ENCODE measurements at regions of chr22 and their contacts with region 1.

Region 1: GRCh38 chr22:42662114-42663021 is 13.2 kb upstream of the CYB5R3 start:
- DNase-seq: peak; percentile 72 to 90 (median 82)
- H3K4me3 ChIP-seq: peak overlapping the region in 1 of 4 donors; percentile 56
- H3K27ac ChIP-seq: peak overlapping the region in 2 of 5 donors; percentile 3 to 9
- H3K4me1 ChIP-seq: peaks cover 0 to 9% of the 10 kb centered on the region in 2 donors
- H3K27me3 ChIP-seq: no peaks in the 10 kb centered on the region
- CTCF ChIP-seq: peak; percentile 62 to 87 (median 74)
- POLR2A ChIP-seq: no peak

Region 2: DNA sequence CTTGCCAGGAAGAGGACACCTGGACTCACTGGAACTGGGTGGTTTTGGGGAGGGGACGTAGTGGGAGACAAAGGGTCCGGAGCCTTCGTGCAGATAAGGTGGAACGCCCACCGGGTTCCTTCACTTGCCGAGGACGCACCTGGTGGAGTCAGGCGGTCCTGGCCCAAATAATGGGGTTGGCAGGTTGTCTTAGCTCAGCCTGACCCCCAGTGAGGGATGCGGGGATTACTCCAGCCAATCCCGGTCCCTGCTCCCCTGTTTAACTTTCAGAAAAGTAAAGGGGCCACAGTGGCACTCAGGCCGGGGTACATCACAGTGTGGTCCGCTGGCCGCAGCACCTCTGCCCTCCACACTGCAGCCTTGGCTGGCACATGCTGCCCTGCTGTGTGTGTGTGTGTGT is 40.3 kb after region 1 on chr22:
- intact Hi-C with region 1: loop called in 1 of 2 experiments (anchors 5 kb)
- DNase-seq: no peak
- H3K4me3 ChIP-seq: no peak overlapping the region
- H3K27ac ChIP-seq: no peak overlapping the region
- H3K4me1 ChIP-seq: peaks cover 5 to 16% of the 10 kb centered on the region in 2 donors
- H3K27me3 ChIP-seq: no peaks in the 10 kb centered on the region
- CTCF ChIP-seq: no peak
- POLR2A ChIP-seq: no peak

Region 3: GRCh38 chr22:42780070-42780540 is 117.7 kb after region 1 on chr22:
- intact Hi-C with region 1: loop called in 1 of 2 experiments (anchors 10 kb)
- DNase-seq: peak; percentile 52 to 88 (median 74)
- H3K4me3 ChIP-seq: no peak overlapping the region
- H3K27ac ChIP-seq: no peak overlapping the region
- H3K4me1 ChIP-seq: no peaks in the 10 kb centered on the region
- H3K27me3 ChIP-seq: no peaks in the 10 kb centered on the region
- CTCF ChIP-seq: peak; percentile 81 to 98 (median 90)
- POLR2A ChIP-seq: no peak

Region 4: DNA sequence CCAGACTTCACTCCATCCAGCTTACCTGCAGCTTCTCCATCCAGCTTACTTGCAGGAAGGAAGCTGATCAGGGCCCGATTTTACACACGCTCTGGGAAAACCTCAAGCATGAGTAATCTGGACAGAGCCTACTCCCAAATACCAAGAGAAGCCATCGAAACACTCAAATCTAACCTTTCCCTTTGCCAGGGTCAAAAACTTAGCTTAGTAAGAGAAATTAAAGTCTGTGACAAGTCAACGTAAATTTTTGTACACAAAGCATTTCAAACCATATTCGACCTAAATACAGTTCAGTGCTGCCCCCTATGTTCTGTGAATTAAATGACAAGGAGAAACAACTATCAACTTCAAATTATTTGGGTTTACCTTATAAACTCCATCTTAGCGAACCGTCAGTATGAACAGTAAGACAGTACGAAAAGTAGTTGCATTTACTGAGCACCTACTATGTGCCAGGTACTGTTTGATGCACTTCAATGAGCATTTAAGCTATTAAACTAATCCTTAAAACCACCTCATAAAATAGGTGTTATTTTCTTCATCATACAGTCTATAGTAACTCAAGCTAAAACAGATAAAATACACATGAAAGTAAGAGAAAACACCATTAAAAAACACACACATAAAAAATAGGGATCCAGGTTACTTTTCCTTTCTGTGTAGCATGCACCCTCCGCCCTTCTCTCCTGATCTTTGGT is 157.8 kb after region 1 on chr22:
- intact Hi-C with region 1: loop called in 1 of 2 experiments (anchors 5 kb)
- DNase-seq: peak in 2 of 7 donors; percentile 27 to 40
- H3K4me3 ChIP-seq: no peak overlapping the region
- H3K27ac ChIP-seq: peak overlapping the region in 2 of 5 donors; percentile 53 to 56
- H3K4me1 ChIP-seq: peaks cover 0 to 16% of the 10 kb centered on the region in 2 donors
- H3K27me3 ChIP-seq: no peaks in the 10 kb centered on the region
- CTCF ChIP-seq: peak in 5 of 6 experiments; percentile 14 to 74 (median 53)
- POLR2A ChIP-seq: no peak

Measured in adrenal gland (tissue), 19 donors.